Ovary (tissue), 10 donors: ENCODE measurements at regions of chr11 and their contacts with region 1.

Region 1: GRCh38 chr11:71356904-71357303 is 91.3 kb downstream of the DHCR7 start:
- DNase-seq: no peak
- H3K4me3 ChIP-seq: no peak overlapping the region
- H3K27ac ChIP-seq: no peak overlapping the region
- H3K4me1 ChIP-seq: no peaks in the 10 kb centered on the region
- H3K27me3 ChIP-seq: no peaks in the 10 kb centered on the region
- CTCF ChIP-seq: no peak
- EP300 ChIP-seq: no peak
- POLR2A ChIP-seq: no peak

Region 2: GRCh38 chr11:71286701-71287643 is 69.9 kb before region 1 on chr11:
- intact Hi-C with region 1: no loop called
- DNase-seq: no peak
- H3K4me3 ChIP-seq: no peak overlapping the region
- H3K27ac ChIP-seq: no peak overlapping the region
- H3K4me1 ChIP-seq: no peaks in the 10 kb centered on the region
- H3K27me3 ChIP-seq: no peaks in the 10 kb centered on the region
- CTCF ChIP-seq: no peak
- EP300 ChIP-seq: no peak
- POLR2A ChIP-seq: no peak

Region 3: GRCh38 chr11:71316701-71317100 is 40.2 kb before region 1 on chr11:
- intact Hi-C with region 1: loop called in 1 of 4 experiments (anchors 2 kb)
- DNase-seq: no peak
- H3K4me3 ChIP-seq: no peak overlapping the region
- H3K27ac ChIP-seq: no peak overlapping the region
- H3K4me1 ChIP-seq: no peaks in the 10 kb centered on the region
- H3K27me3 ChIP-seq: no peaks in the 10 kb centered on the region
- CTCF ChIP-seq: no peak
- EP300 ChIP-seq: no peak
- POLR2A ChIP-seq: no peak